ENCODE measurements at regions of chr6 and their contacts with region 1.

Region 1: DNA sequence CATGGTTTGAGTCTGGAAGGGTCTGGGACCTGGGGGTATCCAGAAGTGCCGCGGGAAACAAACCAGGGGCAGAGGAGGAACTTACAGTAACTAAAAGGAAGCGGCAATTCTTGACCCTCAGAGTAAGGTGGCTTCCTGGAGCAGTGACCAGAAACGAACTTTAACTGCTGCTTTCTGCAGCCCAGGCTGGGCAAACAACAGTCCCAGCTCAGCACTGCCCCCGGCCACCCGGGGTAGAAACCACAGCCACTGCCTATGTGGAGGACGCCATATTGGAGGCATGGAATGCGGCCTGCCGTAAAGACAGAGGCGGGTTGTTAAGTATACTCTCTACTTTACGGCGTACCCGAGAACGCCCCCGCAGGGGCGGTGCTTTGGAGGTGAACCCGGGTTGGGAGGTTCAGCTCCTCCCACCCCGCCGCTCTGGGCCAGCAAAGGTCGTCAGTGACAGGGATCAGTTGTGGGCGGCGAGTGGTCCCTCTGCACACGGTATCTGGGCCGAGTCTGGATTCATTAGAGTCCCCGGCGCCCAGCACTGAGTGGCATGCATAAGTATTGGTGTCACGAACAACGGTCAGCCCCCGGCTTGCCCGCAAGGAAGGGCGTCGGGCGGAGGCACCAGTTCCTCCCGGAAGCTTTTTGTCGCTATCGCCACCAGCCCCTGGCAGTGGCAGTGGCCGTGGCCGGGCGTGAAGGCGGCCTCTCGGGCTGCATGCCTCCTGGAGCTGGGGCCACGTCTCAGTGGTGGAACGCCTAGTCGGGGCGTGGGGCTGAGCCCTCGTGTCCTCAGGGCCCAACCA is at the start of gene PDSS2:
- DNase-seq: peak; percentile 96
- ATAC-seq: peak; percentile 96 to 100 (median 97)
- H3K4me3 ChIP-seq: peak within 1 kb of the TSS; percentile 90
- H3K4me3 Mint-ChIP-seq: peak within 1 kb of the TSS; percentile 91
- H3K27ac ChIP-seq: peak within 1 kb of the TSS; percentile 94
- H3K27ac Mint-ChIP-seq: peak within 1 kb of the TSS; percentile 91 to 97
- H3K4me1 ChIP-seq: peaks cover 17% of the 10 kb centered on the region
- H3K4me1 Mint-ChIP-seq: peaks cover 19 to 21% of the 10 kb centered on the region in 2 donors
- H3K27me3 ChIP-seq: no peaks in the 10 kb centered on the region
- H3K27me3 Mint-ChIP-seq: no peaks in the 10 kb centered on the region
- CTCF ChIP-seq: peak; percentile 26
- total RNA-seq, gene PDSS2: 11.2 to 15.5 (median 14.2) TPM

Region 2: GRCh38 chr6:107021446-107022185 is 437.9 kb before region 1 on chr6:
- intact Hi-C with region 1: loop called (anchors 10 kb)
- DNase-seq: no peak
- ATAC-seq: no peak
- H3K4me3 ChIP-seq: no peak overlapping the region
- H3K4me3 Mint-ChIP-seq: no peak overlapping the region
- H3K27ac ChIP-seq: no peak overlapping the region
- H3K27ac Mint-ChIP-seq: no peak overlapping the region
- H3K4me1 ChIP-seq: no peaks in the 10 kb centered on the region
- H3K4me1 Mint-ChIP-seq: no peaks in the 10 kb centered on the region
- H3K27me3 ChIP-seq: no peaks in the 10 kb centered on the region
- H3K27me3 Mint-ChIP-seq: no peaks in the 10 kb centered on the region
- CTCF ChIP-seq: no peak